Activated CD4-positive, alpha-beta T cell treated with anti-CD3 and anti-CD28 coated beads, Interleukin-2, amount 10 ng/mL, durations not matched to agents 24 days and 14 days (primary cell): ENCODE measurements at regions of chr3 and their contacts with region 1.

Region 1: GRCh38 chr3:12556671-12557472 is at the start of gene MKRN2:
- DNase-seq: peak; percentile 96
- H3K4me3 Mint-ChIP-seq: peak within 1 kb of the TSS; percentile 98
- H3K27ac Mint-ChIP-seq: peak within 1 kb of the TSS; percentile 91
- H3K4me1 Mint-ChIP-seq: peaks cover 44% of the 10 kb centered on the region
- H3K27me3 Mint-ChIP-seq: peaks cover 25% of the 10 kb centered on the region
- total RNA-seq, gene MKRN2: 23.2 and 28.2 TPM in 2 replicates

Region 2: GRCh38 chr3:12841149-12841970 is 284.5 kb after region 1 on chr3 and contains the start of gene RPL32:
- intact Hi-C with region 1: loop called (anchors 2 kb)
- DNase-seq: peak; percentile 95
- H3K4me3 Mint-ChIP-seq: peak within 1 kb of the TSS; percentile 97
- H3K27ac Mint-ChIP-seq: peak within 1 kb of the TSS; percentile 99
- H3K4me1 Mint-ChIP-seq: peaks cover 38% of the 10 kb centered on the region
- H3K27me3 Mint-ChIP-seq: no peaks in the 10 kb centered on the region
- total RNA-seq, gene RPL32: 2,085 and 2,113 TPM in 2 replicates